ENCODE measurements at regions of chr7 and their contacts with region 1.

Region 1: GRCh38 chr7:114979388-114979787 is 57.5 kb downstream of the MDFIC start:
- DNase-seq: no peak
- ATAC-seq: no peak
- H3K4me3 ChIP-seq: no peak overlapping the region
- H3K4me3 Mint-ChIP-seq: peak overlapping the region in 2 of 10 donors; percentile 27 to 32
- H3K27ac ChIP-seq: no peak overlapping the region
- H3K27ac Mint-ChIP-seq: peak overlapping the region in 4 of 9 donors; percentile 34 to 59 (median 50)
- H3K4me1 ChIP-seq: peaks cover 0 to 11% of the 10 kb centered on the region in 2 donors
- H3K4me1 Mint-ChIP-seq: peaks cover 27 to 65% (median 55%) of the 10 kb centered on the region in 7 donors
- H3K27me3 ChIP-seq: no peaks in the 10 kb centered on the region
- H3K27me3 Mint-ChIP-seq: no peaks in the 10 kb centered on the region

Region 2: DNA sequence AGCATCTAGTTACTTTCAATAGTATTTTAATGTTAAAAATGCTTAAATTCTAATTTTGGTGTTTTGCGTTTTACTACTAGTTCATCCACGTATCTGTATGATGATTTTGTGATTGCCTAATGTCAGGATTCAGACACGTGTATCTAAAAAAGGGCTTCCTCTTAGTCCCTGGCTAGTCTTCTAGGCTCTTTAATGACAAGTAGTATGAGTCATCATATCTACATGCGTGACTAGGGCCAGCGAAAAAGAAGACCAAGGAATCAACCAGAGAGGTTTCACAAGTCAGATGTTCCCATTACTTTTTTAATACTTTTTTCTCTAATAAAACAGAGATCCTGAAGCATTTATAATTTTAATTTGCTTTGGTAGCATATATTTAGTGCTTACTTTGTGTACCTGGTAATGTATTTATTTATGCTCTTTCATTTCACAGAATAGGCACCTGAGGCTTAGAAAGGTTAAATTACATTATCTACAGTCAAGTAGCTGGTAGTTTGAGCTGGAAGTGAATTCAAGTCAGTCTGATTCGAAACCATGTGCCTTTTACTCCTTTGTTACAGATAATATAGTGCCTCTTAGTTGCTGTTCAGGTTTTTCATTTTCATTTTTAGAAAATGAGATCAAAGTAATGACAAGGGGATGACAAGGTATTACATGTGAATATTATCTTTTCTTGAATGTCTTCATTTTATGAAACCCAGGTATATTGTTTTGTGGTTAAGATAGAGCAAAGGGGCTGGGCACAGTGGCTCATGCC is 424.4 kb before region 1 on chr7:
- CTCF ChIA-PET with region 1: no interaction called
- POLR2A ChIA-PET with region 1: no interaction called
- intact Hi-C with region 1: no loop called
- DNase-seq: no peak
- ATAC-seq: no peak
- H3K4me3 ChIP-seq: no peak overlapping the region
- H3K4me3 Mint-ChIP-seq: no peak overlapping the region
- H3K27ac ChIP-seq: no peak overlapping the region
- H3K27ac Mint-ChIP-seq: no peak overlapping the region
- H3K4me1 ChIP-seq: no peaks in the 10 kb centered on the region
- H3K4me1 Mint-ChIP-seq: no peaks in the 10 kb centered on the region
- H3K27me3 ChIP-seq: no peaks in the 10 kb centered on the region
- H3K27me3 Mint-ChIP-seq: peaks cover 0 to 4% (median 0%) of the 10 kb centered on the region in 5 donors

Region 3: DNA sequence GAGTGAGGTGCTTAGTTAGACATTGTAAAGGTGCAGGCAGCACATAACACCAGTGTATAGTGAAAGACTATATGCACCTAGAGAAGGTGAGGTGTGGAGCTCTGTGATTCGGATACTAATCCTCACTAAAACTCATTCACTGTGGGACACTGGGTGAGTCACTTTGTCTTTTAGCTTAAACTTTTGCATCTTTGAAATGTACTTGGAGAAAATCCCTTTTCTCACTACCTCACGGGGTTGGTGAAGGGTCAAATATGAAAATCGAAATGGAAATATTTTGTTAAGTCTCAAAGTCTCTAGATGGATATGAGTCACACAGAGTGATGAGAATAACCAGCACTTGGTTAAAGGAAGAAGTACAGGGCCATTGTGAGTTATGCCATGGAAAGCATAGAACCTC is 19.5 kb before region 1 on chr7:
- CTCF ChIA-PET with region 1: no interaction called
- POLR2A ChIA-PET with region 1: no interaction called
- intact Hi-C with region 1: loop called in 1 of 2 experiments (anchors 2 kb)
- DNase-seq: no peak
- ATAC-seq: no peak
- H3K4me3 ChIP-seq: no peak overlapping the region
- H3K4me3 Mint-ChIP-seq: no peak overlapping the region
- H3K27ac ChIP-seq: no peak overlapping the region
- H3K27ac Mint-ChIP-seq: peak overlapping the region in 2 of 9 donors; percentile 47 to 56
- H3K4me1 ChIP-seq: peaks cover 6 to 39% of the 10 kb centered on the region in 2 donors
- H3K4me1 Mint-ChIP-seq: peaks cover 37 to 79% (median 58%) of the 10 kb centered on the region in 7 donors
- H3K27me3 ChIP-seq: no peaks in the 10 kb centered on the region
- H3K27me3 Mint-ChIP-seq: no peaks in the 10 kb centered on the region

Region 4: DNA sequence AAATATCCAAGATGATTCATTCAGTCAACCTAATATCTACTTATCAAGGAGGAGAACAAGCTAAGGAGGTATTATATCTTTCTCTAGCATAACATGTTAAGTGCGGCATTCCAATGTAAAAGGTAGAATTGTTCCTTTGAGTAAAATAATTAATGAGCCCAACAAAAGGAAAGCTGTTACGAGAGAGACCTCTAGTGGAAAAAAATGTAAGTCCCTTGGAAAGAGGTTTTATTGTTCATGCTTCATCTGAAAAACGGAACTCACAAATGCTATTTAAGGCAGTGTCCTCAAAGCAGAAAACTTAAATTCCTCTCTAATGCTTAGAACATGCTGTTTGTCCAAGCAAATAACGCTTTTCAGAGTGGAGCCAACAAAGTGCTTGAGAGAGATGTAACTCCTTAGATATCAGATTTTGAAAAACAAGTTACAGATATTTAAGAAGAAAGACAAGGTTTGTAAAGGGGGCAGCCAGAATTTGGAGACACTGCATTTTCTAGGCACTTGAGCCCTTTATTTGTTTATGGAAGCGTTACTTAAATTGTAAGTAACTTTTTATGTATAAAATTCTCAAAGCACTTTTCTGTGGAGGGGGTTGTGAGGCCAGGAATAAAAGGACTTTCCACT is 931.3 kb after region 1 on chr7:
- CTCF ChIA-PET with region 1: no interaction called
- POLR2A ChIA-PET with region 1: no interaction called
- intact Hi-C with region 1: loop called in 1 of 2 experiments (anchors 5 kb)
- DNase-seq: peak in 2 of 9 donors; percentile 2 to 3
- ATAC-seq: no peak
- H3K4me3 ChIP-seq: no peak overlapping the region
- H3K4me3 Mint-ChIP-seq: no peak overlapping the region
- H3K27ac ChIP-seq: no peak overlapping the region
- H3K27ac Mint-ChIP-seq: no peak overlapping the region
- H3K4me1 ChIP-seq: no peaks in the 10 kb centered on the region
- H3K4me1 Mint-ChIP-seq: no peaks in the 10 kb centered on the region
- H3K27me3 ChIP-seq: no peaks in the 10 kb centered on the region
- H3K27me3 Mint-ChIP-seq: peaks cover 0 to 11% (median 3%) of the 10 kb centered on the region in 5 donors